ENCODE measurements at regions of chr12 and their contacts with region 1.

Region 1: DNA sequence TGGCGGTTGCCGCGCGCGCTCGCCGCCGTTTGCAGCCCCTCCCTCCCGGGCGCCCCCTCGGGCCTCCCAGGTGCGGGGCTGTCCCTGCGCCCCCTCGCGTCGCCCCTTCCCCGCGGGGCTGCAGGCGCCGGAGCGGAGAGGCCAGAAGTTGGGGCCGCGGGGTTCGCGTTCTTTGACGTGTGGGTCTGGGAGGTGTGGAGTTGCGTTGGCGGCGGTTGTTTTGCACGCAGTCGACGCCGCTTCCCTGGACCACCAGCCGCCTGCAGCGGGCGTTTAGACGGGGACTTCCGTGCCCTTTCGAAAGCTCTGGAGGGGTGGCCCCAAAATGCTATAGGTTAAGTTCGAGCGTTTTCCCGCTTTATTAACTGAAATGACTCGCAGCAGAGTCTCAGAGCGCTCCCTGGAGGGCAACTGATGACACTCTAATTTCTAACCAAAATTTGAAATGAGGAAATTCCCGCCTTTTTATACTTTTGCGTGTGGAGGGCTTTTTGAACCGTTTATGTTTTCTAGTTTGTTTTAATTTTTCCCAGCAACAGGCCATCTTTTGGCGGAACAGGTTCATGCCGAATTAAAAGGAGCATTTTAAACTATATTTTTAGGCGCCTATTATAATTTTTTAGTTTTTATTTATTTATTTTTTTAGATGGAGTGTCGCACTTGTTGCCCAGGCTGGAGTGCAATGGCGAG is 939 bp downstream of the TMPO start:
- DNase-seq: peak; percentile 58 to 95 (median 73)
- ATAC-seq: peak; percentile 63
- H3K4me3 ChIP-seq: peak overlapping the region; percentile 92
- H3K4me3 Mint-ChIP-seq: peak overlapping the region; percentile 98
- H3K27ac ChIP-seq: peak overlapping the region; percentile 46 to 97
- H3K27ac Mint-ChIP-seq: peak overlapping the region; percentile 98
- H3K4me1 ChIP-seq: peaks cover 35% of the 10 kb centered on the region
- H3K4me1 Mint-ChIP-seq: peaks cover 65% of the 10 kb centered on the region
- H3K27me3 ChIP-seq: no peaks in the 10 kb centered on the region
- H3K27me3 Mint-ChIP-seq: no peaks in the 10 kb centered on the region
- CTCF ChIP-seq: peak; percentile 86

Region 2: DNA sequence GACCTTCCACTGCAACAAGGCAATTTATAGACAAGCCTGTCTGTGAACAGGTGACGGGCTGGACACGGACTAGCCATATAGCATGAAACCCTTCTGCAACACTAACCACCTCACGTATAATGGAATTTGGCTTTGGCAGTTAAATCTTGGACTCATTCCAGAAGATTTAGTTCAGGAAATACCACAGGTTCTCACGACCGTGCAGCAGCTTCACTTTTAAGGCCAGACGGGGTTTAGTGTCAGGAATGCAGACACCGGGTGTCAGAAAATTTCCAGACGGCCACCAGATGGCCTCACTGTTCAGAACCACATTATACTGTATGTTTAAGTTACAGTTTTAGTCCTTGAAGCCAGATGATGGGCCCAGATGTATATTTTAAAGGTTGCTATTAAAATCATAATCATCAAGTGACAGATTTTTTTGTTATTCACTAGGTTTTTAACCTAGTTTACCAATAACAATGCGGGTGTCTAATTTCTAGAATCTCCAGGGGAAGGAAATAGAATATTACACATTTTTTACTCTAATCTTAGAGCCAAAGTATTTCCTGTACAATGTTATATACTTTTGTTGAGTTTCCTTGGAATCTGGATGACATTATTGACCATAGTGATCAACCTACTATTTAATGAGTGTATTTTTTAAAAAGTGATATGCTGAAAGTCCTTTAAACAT is 91.5 kb before region 1 on chr12:
- CTCF ChIA-PET with region 1: interaction called, 3 read pairs
- POLR2A ChIA-PET with region 1: interaction called, 4 read pairs
- intact Hi-C with region 1: loop called (anchors 1 kb)
- DNase-seq: peak; percentile 19 to 69 (median 40)
- ATAC-seq: peak; percentile 65
- H3K4me3 ChIP-seq: no peak overlapping the region
- H3K4me3 Mint-ChIP-seq: no peak overlapping the region
- H3K27ac ChIP-seq: no peak overlapping the region
- H3K27ac Mint-ChIP-seq: no peak overlapping the region
- H3K4me1 ChIP-seq: no peaks in the 10 kb centered on the region
- H3K4me1 Mint-ChIP-seq: no peaks in the 10 kb centered on the region
- H3K27me3 ChIP-seq: no peaks in the 10 kb centered on the region
- H3K27me3 Mint-ChIP-seq: no peaks in the 10 kb centered on the region
- CTCF ChIP-seq: peak; percentile 64

Region 3: GRCh38 chr12:98503592-98504367 is 12.5 kb before region 1 on chr12:
- CTCF ChIA-PET with region 1: interaction called, 7 read pairs
- POLR2A ChIA-PET with region 1: interaction called, 136 read pairs
- intact Hi-C with region 1: loop called (anchors 1 kb)
- DNase-seq: peak; percentile 90 to 97 (median 94)
- ATAC-seq: peak; percentile 85
- H3K4me3 ChIP-seq: peak overlapping the region; percentile 95
- H3K4me3 Mint-ChIP-seq: peak overlapping the region; percentile 99
- H3K27ac ChIP-seq: peak overlapping the region; percentile 88 to 97
- H3K27ac Mint-ChIP-seq: peak overlapping the region; percentile 100
- H3K4me1 ChIP-seq: peaks cover 28% of the 10 kb centered on the region
- H3K4me1 Mint-ChIP-seq: peaks cover 34% of the 10 kb centered on the region
- H3K27me3 ChIP-seq: no peaks in the 10 kb centered on the region
- H3K27me3 Mint-ChIP-seq: peaks cover 18% of the 10 kb centered on the region
- CTCF ChIP-seq: no peak

Region 4: GRCh38 chr12:98593351-98594049 is 77.2 kb after region 1 on chr12 and contains the start of gene SLC25A3:
- CTCF ChIA-PET with region 1: interaction called, 5 read pairs
- POLR2A ChIA-PET with region 1: interaction called, 48 read pairs
- intact Hi-C with region 1: loop called (anchors 1 to 5 kb)
- DNase-seq: peak; percentile 91 to 99 (median 94)
- ATAC-seq: peak; percentile 94
- H3K4me3 ChIP-seq: peak within 1 kb of the TSS; percentile 97
- H3K4me3 Mint-ChIP-seq: peak within 1 kb of the TSS; percentile 95
- H3K27ac ChIP-seq: peak within 1 kb of the TSS; percentile 90 to 98
- H3K27ac Mint-ChIP-seq: peak within 1 kb of the TSS; percentile 93
- H3K4me1 ChIP-seq: peaks cover 22% of the 10 kb centered on the region
- H3K4me1 Mint-ChIP-seq: peaks cover 38% of the 10 kb centered on the region
- H3K27me3 ChIP-seq: no peaks in the 10 kb centered on the region
- H3K27me3 Mint-ChIP-seq: no peaks in the 10 kb centered on the region
- CTCF ChIP-seq: no peak
- total RNA-seq, gene SLC25A3: 602 to 615 TPM

Region 5: GRCh38 chr12:98612696-98613334 is 96.5 kb after region 1 on chr12:
- CTCF ChIA-PET with region 1: no interaction called
- POLR2A ChIA-PET with region 1: no interaction called
- intact Hi-C with region 1: no loop called
- DNase-seq: peak in 1 of 14 experiments; percentile 20
- ATAC-seq: no peak
- H3K4me3 ChIP-seq: no peak overlapping the region
- H3K4me3 Mint-ChIP-seq: no peak overlapping the region
- H3K27ac ChIP-seq: no peak overlapping the region
- H3K27ac Mint-ChIP-seq: peak overlapping the region; percentile 56
- H3K4me1 ChIP-seq: no peaks in the 10 kb centered on the region
- H3K4me1 Mint-ChIP-seq: peaks cover 6% of the 10 kb centered on the region
- H3K27me3 ChIP-seq: no peaks in the 10 kb centered on the region
- H3K27me3 Mint-ChIP-seq: no peaks in the 10 kb centered on the region
- CTCF ChIP-seq: no peak

Region 6: DNA sequence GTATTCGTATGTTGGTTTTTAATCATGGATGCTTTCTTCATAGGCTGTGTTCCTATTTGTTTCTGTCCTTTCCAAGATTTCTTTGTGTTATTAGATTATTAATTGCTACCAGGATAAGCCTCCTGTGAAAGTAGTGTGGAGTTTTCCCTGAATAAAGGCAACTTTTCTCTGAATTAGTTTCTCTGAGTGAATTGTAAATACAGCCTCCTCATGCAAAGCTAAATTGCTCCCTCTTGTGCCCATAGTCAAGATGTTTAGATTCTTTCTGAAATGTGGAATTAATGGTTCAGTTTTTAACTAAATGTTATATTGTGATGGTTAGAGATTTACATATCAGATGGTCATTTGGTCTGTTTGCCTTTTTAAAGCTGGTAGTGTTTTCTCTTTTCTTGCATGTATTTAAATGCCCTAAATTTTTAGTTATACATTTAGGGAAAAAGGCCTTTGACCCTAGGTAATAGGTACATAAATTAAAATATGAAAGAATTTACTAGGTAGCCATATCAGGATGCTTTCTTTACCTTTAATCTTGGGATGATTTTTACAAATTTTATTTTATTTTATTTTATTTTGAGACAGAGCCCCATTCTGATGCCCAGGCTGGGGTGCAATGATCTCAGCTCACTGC is 137.7 kb after region 1 on chr12:
- CTCF ChIA-PET with region 1: no interaction called
- POLR2A ChIA-PET with region 1: no interaction called
- intact Hi-C with region 1: loop called (anchors 5 kb)
- DNase-seq: peak in 4 of 14 experiments; percentile 11 to 74 (median 71)
- ATAC-seq: peak; percentile 55
- H3K4me3 ChIP-seq: no peak overlapping the region
- H3K4me3 Mint-ChIP-seq: no peak overlapping the region
- H3K27ac ChIP-seq: no peak overlapping the region
- H3K27ac Mint-ChIP-seq: no peak overlapping the region
- H3K4me1 ChIP-seq: no peaks in the 10 kb centered on the region
- H3K4me1 Mint-ChIP-seq: peaks cover 16% of the 10 kb centered on the region
- H3K27me3 ChIP-seq: no peaks in the 10 kb centered on the region
- H3K27me3 Mint-ChIP-seq: no peaks in the 10 kb centered on the region
- CTCF ChIP-seq: peak; percentile 76

Measured in CD4-positive, alpha-beta T cell (primary cell).